Activated CD4-positive, alpha-beta T cell treated with anti-CD3 and anti-CD28 coated beads for 36 hours (primary cell): ENCODE measurements at regions of chr2 and their contacts with region 1.

Region 1: GRCh38 chr2:68594674-68595492 is 48.5 kb upstream of the PROKR1 start:
- DNase-seq: peak; percentile 72
- ATAC-seq: peak; percentile 49
- H3K4me3 Mint-ChIP-seq: no peak overlapping the region
- H3K27ac Mint-ChIP-seq: no peak overlapping the region
- H3K4me1 Mint-ChIP-seq: peaks cover 6% of the 10 kb centered on the region
- H3K27me3 Mint-ChIP-seq: peaks cover 9% of the 10 kb centered on the region

Region 2: DNA sequence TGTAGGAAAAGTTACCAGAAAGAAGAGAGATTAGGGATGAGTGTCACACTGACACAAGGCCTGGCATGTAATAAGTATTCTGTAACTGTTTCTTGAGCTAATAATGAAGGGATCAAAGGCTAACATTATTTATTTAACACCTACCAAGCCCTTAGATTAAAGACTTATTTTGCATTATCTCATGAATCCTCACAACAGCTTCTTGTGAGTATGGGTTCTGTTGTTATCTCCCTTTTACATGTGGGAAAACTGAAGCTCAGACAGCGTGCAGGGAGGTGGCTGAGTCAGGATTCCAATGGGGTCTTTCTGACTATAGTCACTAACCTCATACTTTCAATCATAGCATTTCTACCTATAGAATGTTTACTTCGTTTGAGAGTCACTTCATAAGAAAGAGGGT is 30.5 kb before region 1 on chr2:
- CTCF ChIA-PET with region 1: interaction called, 11 read pairs
- POLR2A ChIA-PET with region 1: no interaction called
- intact Hi-C with region 1: no loop called
- DNase-seq: no peak
- ATAC-seq: no peak
- H3K4me3 Mint-ChIP-seq: no peak overlapping the region
- H3K27ac Mint-ChIP-seq: no peak overlapping the region
- H3K4me1 Mint-ChIP-seq: peaks cover 6% of the 10 kb centered on the region
- H3K27me3 Mint-ChIP-seq: no peaks in the 10 kb centered on the region

Region 3: DNA sequence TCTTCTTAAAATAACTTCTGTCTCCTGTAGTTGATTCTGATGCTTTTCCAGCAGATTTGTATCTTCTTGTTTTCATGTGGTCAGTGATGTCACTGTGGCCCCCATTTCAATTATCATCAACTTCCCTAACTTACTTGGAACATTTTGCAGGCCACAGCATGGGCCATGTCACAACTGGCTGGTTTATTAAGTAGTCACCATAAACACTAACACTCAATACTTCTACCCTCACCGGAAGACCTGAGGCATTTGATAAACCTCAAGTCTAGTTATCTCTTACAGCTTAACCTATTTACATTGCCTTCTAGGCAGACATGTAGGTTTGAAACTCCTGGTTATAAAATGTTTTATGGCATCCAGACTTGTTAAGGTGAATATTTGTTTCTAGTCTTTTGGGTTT is 11.1 kb after region 1 on chr2:
- CTCF ChIA-PET with region 1: interaction called, 15 read pairs
- POLR2A ChIA-PET with region 1: no interaction called
- intact Hi-C with region 1: no loop called
- DNase-seq: no peak
- ATAC-seq: no peak
- H3K4me3 Mint-ChIP-seq: no peak overlapping the region
- H3K27ac Mint-ChIP-seq: no peak overlapping the region
- H3K4me1 Mint-ChIP-seq: peaks cover 3% of the 10 kb centered on the region
- H3K27me3 Mint-ChIP-seq: peaks cover 6% of the 10 kb centered on the region